H1 (cell line): ENCODE measurements at regions of chr7 and their contacts with region 1.

Region 1: DNA sequence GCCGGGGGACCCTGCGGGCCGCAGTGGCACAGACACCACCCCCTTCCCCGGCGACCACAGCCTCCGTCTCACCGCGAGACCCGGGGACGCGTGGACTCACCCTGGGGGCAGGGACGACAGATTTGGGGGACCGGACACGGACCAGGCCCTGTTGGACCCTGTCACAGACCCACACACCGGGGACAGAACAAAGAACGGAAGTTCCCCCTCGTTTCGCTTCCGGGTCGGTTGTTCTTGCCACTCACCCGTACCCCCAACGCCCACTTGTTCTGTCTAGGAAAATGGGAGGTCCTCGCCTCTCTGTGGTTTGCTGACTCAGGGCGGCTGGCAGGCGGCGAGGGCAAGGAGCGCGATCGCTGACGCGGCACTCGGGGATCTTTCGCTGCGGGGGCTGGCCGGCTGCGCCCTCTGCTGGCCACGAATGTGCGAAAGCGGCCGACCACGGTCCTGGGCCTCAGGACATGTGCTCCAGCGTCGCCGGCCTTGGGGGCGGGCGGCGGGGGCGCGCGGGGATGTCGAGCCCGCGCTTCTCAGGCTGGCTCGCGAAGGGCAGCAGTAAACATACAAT is at the start of gene ZNF3:
- DNase-seq: peak; percentile 97
- H3K4me3 ChIP-seq: peak within 1 kb of the TSS; percentile 76 to 100 (median 96)
- H3K27ac ChIP-seq: peak within 1 kb of the TSS; percentile 91
- H3K4me1 ChIP-seq: peaks cover 0 to 9% (median 4%) of the 10 kb centered on the region in 4 experiments; a peak in 3 of 7 replicates
- H3K27me3 ChIP-seq: no peaks in the 10 kb centered on the region
- CTCF ChIP-seq: peak; percentile 84 to 94 (median 85)
- EP300 ChIP-seq: peak in 1 of 2 experiments; percentile 81; a peak in 1 of 3 replicates
- POLR2A ChIP-seq: peak; percentile 77 to 95
- RAD21 ChIP-seq: peak; percentile 67 to 71
- total RNA-seq, gene ZNF3: 49.1 and 50.7 TPM in 2 replicates

Region 2: GRCh38 chr7:100049441-100050311 is 31.9 kb before region 1 on chr7 and contains the start of gene ZSCAN21:
- CTCF ChIA-PET with region 1: interaction called, 3 read pairs
- POLR2A ChIA-PET with region 1: interaction called, 294 read pairs
- DNase-seq: peak; percentile 34 to 95
- H3K4me3 ChIP-seq: peak within 1 kb of the TSS; percentile 79 to 98 (median 86)
- H3K27ac ChIP-seq: peak within 1 kb of the TSS; percentile 86
- H3K4me1 ChIP-seq: peaks cover 0 to 3% (median 0%) of the 10 kb centered on the region in 4 experiments; a peak in 3 of 7 replicates
- H3K27me3 ChIP-seq: peaks cover 0 to 1% (median 0%) of the 10 kb centered on the region in 4 experiments; a peak in 1 of 7 replicates
- CTCF ChIP-seq: peak in 1 of 3 experiments; percentile 7; a peak in 1 of 4 replicates
- EP300 ChIP-seq: no peak
- POLR2A ChIP-seq: peak; percentile 84 to 94
- RAD21 ChIP-seq: no peak
- total RNA-seq, gene ZSCAN21: 25.4 and 26.1 TPM in 2 replicates